Activated CD8-positive, alpha-beta memory T cell treated with anti-CD3 and anti-CD28 coated beads, Interleukin-2, amount 10 ng/mL, durations not matched to agents 7 days and 5 days (primary cell): ENCODE measurements at regions of chr6 and their contacts with region 1.

Region 1: DNA sequence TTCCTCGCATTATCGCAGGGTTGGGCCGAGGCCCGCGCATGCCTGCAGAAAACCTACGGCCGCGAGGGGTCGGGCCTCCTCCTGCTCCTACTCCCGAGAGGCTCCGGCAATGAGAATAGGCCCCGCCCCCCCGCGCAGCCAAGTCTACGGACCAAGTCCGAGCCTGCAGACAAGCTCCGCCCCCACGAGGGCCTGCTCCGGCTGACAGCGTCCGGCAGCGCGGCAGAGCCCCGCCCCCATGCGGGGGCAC is 3.1 kb upstream of the GPSM3 start:
- DNase-seq: peak; percentile 100
- ATAC-seq: peak; percentile 87
- H3K4me3 Mint-ChIP-seq: peak overlapping the region; percentile 95
- H3K27ac Mint-ChIP-seq: peak overlapping the region; percentile 99
- H3K4me1 Mint-ChIP-seq: peaks cover 26% of the 10 kb centered on the region
- H3K27me3 Mint-ChIP-seq: no peaks in the 10 kb centered on the region

Region 2: GRCh38 chr6:31945507-31946369 is 249.8 kb before region 1 on chr6 and contains the start of gene CFB:
- CTCF ChIA-PET with region 1: no interaction called
- DNase-seq: no peak
- ATAC-seq: no peak
- H3K4me3 Mint-ChIP-seq: no peak within 1 kb of the TSS
- H3K27ac Mint-ChIP-seq: no peak within 1 kb of the TSS
- H3K4me1 Mint-ChIP-seq: peaks cover 4% of the 10 kb centered on the region
- H3K27me3 Mint-ChIP-seq: peaks cover 23% of the 10 kb centered on the region
- total RNA-seq, gene CFB: 0.12 TPM in 1 of 2 experiments, not detected in the other

Region 3: DNA sequence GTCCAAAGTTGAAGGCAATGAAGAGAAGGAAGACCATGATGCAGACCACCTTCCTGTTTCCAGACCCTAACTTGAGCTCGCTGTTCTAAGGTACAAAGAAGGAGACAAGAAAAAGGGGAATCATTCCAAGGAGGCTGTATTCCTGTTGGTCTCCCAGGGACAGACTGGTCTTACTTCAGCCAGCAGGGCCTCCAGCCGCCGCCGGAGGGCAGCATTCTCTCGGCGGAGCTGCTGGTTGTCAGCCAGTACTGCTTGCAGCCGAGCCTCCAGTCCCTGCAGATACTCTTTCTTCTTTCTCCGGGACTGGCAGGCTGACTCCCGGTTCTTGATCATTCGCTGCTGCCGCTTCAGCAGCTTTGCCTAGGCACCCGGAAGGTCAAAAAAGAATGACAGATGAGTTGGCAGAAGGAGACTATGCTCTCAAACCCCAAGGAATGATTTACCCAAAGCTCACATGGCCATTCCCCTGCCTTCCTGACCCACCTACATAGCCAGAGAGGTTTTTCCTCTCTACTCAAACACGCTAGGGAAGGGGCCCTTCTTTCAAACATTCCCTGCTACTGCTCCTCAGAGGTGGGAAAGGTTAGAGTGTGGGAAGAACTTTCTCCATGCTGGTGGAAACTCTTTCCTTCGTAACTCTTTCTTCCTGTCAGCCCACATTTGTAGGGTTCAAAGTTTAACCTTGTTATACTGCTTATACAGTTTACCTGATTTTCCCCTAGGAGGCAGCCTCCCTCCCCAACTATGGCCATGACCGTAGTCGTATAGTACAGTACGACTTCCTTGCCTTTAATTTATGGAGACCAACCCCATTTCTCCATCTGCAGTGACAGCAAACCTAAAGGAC is 76.6 kb before region 1 on chr6:
- CTCF ChIA-PET with region 1: interaction called, 16 read pairs
- DNase-seq: peak; percentile 80
- ATAC-seq: peak; percentile 91
- H3K4me3 Mint-ChIP-seq: no peak overlapping the region
- H3K27ac Mint-ChIP-seq: peak overlapping the region; percentile 30
- H3K4me1 Mint-ChIP-seq: peaks cover 3% of the 10 kb centered on the region
- H3K27me3 Mint-ChIP-seq: no peaks in the 10 kb centered on the region

Region 4: GRCh38 chr6:32127717-32128592 is 67.6 kb before region 1 on chr6 and contains the start of gene ATF6B:
- CTCF ChIA-PET with region 1: interaction called, 12 read pairs
- DNase-seq: peak; percentile 99
- ATAC-seq: peak; percentile 94
- H3K4me3 Mint-ChIP-seq: peak within 1 kb of the TSS; percentile 99
- H3K27ac Mint-ChIP-seq: peak within 1 kb of the TSS; percentile 98
- H3K4me1 Mint-ChIP-seq: peaks cover 40% of the 10 kb centered on the region
- H3K27me3 Mint-ChIP-seq: no peaks in the 10 kb centered on the region
- total RNA-seq, gene ATF6B: 119 to 135 TPM

Region 5: GRCh38 chr6:32177788-32178546 is 17.6 kb before region 1 on chr6 and contains the start of gene RNF5:
- CTCF ChIA-PET with region 1: interaction called, 31 read pairs
- DNase-seq: peak; percentile 98
- ATAC-seq: peak; percentile 86
- H3K4me3 Mint-ChIP-seq: peak within 1 kb of the TSS; percentile 93
- H3K27ac Mint-ChIP-seq: peak within 1 kb of the TSS; percentile 94
- H3K4me1 Mint-ChIP-seq: peaks cover 58% of the 10 kb centered on the region
- H3K27me3 Mint-ChIP-seq: no peaks in the 10 kb centered on the region
- total RNA-seq, gene RNF5: 41.0 to 51.9 TPM

Region 6: DNA sequence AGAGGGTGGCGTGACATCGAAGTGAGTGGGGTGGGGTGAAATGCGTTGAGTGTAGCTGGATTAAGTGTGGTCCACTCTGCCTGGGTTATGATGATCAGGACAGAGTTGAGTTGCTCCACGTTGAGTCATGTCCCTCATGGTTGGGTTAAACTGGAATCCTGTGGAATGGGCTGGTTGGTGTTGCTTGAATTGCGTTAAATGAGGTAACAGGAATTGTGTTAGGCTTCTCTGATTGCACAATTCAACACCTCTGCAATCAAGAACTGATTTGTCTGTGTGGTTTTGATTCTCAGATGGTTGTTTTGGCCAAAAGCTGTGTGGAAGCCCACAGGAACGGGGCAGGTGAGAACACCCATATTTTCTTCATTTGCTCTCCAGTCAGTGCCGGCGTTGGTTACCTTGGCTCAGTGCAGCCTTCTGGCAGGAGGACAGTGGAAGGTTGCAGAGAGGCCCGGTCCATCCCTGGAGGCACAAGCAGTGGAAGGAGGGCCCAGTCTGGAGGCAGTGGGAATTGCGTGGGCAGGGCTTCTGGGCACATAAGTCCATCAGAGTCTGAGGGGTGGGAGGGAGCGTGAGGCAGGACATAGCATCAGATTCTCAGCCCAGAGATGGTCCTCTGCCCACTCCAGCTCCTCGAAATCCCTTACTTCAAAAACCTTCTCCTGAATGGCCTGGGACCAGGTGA is 16.6 kb after region 1 on chr6:
- CTCF ChIA-PET with region 1: no interaction called
- DNase-seq: no peak
- ATAC-seq: no peak
- H3K4me3 Mint-ChIP-seq: no peak overlapping the region
- H3K27ac Mint-ChIP-seq: no peak overlapping the region
- H3K4me1 Mint-ChIP-seq: peaks cover 5% of the 10 kb centered on the region
- H3K27me3 Mint-ChIP-seq: no peaks in the 10 kb centered on the region